WTC11 (cell line): ENCODE measurements at regions of chr17 and their contacts with region 1.

Region 1: GRCh38 chr17:66567234-66568170 is 265.1 kb downstream of the PRKCA start:
- DNase-seq: peak; percentile 89
- ATAC-seq: peak; percentile 83
- H3K4me3 Mint-ChIP-seq: no peak overlapping the region
- H3K27ac Mint-ChIP-seq: no peak overlapping the region
- H3K4me1 Mint-ChIP-seq: peaks cover 32% of the 10 kb centered on the region
- H3K27me3 Mint-ChIP-seq: peaks cover 2% of the 10 kb centered on the region; the same call in 1 of the 2 replicates
- CTCF ChIP-seq: peak; percentile 84

Region 2: GRCh38 chr17:66304304-66305174 is 263.0 kb before region 1 on chr17:
- CTCF ChIA-PET with region 1: interaction called, 13 read pairs
- POLR2A ChIA-PET with region 1: no interaction called
- DNase-seq: peak; percentile 52
- ATAC-seq: peak; percentile 76
- H3K4me3 Mint-ChIP-seq: peak overlapping the region; percentile 92
- H3K27ac Mint-ChIP-seq: peak overlapping the region; percentile 86
- H3K4me1 Mint-ChIP-seq: peaks cover 57% of the 10 kb centered on the region
- H3K27me3 Mint-ChIP-seq: peaks cover 29% of the 10 kb centered on the region
- CTCF ChIP-seq: no peak

Region 3: GRCh38 chr17:66310528-66311148 is 256.9 kb before region 1 on chr17:
- CTCF ChIA-PET with region 1: interaction called, 13 read pairs
- POLR2A ChIA-PET with region 1: no interaction called
- DNase-seq: peak; percentile 44
- ATAC-seq: peak; percentile 91
- H3K4me3 Mint-ChIP-seq: no peak overlapping the region
- H3K27ac Mint-ChIP-seq: no peak overlapping the region
- H3K4me1 Mint-ChIP-seq: peaks cover 35% of the 10 kb centered on the region
- H3K27me3 Mint-ChIP-seq: no peaks in the 10 kb centered on the region
- CTCF ChIP-seq: peak; percentile 54; the same call in 1 of the 2 replicates